CD8-positive, alpha-beta T cell (primary cell): ENCODE measurements at regions of chrX and their contacts with region 1.

Region 1: DNA sequence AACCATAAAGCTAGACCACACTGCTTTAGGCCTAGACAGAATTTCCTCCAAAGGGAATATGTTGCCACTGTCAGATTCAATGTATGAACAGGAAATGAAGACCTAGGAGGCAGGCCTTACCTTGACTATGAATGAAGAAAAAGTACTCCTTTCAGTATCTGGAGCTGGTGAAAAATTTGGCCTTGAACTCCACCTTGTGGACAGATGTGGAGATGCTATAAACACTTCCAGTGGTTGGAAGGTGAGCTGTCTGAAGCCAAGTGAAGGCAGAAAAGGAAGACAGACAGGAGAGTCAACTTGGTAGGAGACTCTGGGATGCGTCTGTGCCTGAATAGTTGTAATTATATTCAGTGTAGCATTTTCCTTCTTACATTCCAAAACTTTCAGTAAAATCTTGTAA is 17.2 kb downstream of the SPIN3 start:
- DNase-seq: peak in 8 of 9 experiments; percentile 5 to 69 (median 35)
- ATAC-seq: peak; percentile 88
- H3K4me3 ChIP-seq: no peak overlapping the region
- H3K4me3 Mint-ChIP-seq: no peak overlapping the region
- H3K27ac ChIP-seq: no peak overlapping the region
- H3K27ac Mint-ChIP-seq: no peak overlapping the region
- H3K4me1 ChIP-seq: no peaks in the 10 kb centered on the region
- H3K4me1 Mint-ChIP-seq: peaks cover 3% of the 10 kb centered on the region
- H3K27me3 ChIP-seq: no peaks in the 10 kb centered on the region
- H3K27me3 Mint-ChIP-seq: no peaks in the 10 kb centered on the region
- CTCF ChIP-seq: peak; percentile 66

Region 2: DNA sequence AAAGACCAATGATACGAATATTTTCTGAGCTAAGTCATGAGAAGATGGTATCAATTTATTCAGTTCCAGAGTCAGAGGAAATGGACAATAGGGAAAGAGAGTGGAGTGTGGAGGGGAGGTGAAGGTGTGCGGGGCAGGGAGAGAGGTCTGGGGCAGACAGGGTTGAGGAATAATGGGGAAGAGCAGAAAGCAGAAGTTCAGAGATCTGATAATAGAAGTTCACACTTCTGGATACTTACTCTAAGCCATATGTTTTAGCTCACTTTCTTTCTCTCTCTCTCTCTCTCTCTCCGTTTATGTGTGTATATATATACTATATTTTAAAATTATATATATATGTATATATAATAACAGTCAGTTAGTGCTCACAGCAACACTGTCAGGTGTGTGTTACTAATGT is 1314.6 kb before region 1 on chrX:
- CTCF ChIA-PET with region 1: no interaction called
- POLR2A ChIA-PET with region 1: no interaction called
- intact Hi-C with region 1: no loop called
- DNase-seq: no peak
- ATAC-seq: no peak
- H3K4me3 ChIP-seq: no peak overlapping the region
- H3K4me3 Mint-ChIP-seq: no peak overlapping the region
- H3K27ac ChIP-seq: no peak overlapping the region
- H3K27ac Mint-ChIP-seq: no peak overlapping the region
- H3K4me1 ChIP-seq: no peaks in the 10 kb centered on the region
- H3K4me1 Mint-ChIP-seq: no peaks in the 10 kb centered on the region
- H3K27me3 ChIP-seq: no peaks in the 10 kb centered on the region
- H3K27me3 Mint-ChIP-seq: no peaks in the 10 kb centered on the region
- CTCF ChIP-seq: no peak

Region 3: DNA sequence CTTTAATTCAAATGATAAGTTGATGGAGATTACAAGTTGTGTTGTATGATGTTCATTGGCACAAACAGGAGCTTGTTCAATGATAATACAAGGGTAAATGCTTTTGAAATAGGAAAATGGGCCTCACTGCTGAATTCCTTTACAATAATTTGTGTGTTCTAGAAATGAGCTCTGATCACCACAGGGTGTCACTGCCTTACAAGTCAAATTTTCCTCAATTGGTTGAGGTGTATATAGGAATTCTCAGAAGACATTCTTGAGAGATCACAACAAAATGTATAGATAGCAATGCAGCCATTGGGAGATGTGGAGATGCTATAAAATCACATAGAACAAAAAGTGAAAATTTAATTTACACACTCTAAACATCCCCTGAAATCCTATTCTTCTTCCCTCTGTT is 696.4 kb before region 1 on chrX:
- CTCF ChIA-PET with region 1: interaction called, 15 read pairs
- POLR2A ChIA-PET with region 1: no interaction called
- intact Hi-C with region 1: loop called in 1 of 2 experiments (anchors 2 kb)
- DNase-seq: peak in 4 of 9 experiments; percentile 6 to 68 (median 30)
- ATAC-seq: no peak
- H3K4me3 ChIP-seq: no peak overlapping the region
- H3K4me3 Mint-ChIP-seq: no peak overlapping the region
- H3K27ac ChIP-seq: no peak overlapping the region
- H3K27ac Mint-ChIP-seq: no peak overlapping the region
- H3K4me1 ChIP-seq: peaks cover 6% of the 10 kb centered on the region
- H3K4me1 Mint-ChIP-seq: peaks cover 8% of the 10 kb centered on the region
- H3K27me3 ChIP-seq: no peaks in the 10 kb centered on the region
- H3K27me3 Mint-ChIP-seq: no peaks in the 10 kb centered on the region
- CTCF ChIP-seq: peak; percentile 43

Region 4: DNA sequence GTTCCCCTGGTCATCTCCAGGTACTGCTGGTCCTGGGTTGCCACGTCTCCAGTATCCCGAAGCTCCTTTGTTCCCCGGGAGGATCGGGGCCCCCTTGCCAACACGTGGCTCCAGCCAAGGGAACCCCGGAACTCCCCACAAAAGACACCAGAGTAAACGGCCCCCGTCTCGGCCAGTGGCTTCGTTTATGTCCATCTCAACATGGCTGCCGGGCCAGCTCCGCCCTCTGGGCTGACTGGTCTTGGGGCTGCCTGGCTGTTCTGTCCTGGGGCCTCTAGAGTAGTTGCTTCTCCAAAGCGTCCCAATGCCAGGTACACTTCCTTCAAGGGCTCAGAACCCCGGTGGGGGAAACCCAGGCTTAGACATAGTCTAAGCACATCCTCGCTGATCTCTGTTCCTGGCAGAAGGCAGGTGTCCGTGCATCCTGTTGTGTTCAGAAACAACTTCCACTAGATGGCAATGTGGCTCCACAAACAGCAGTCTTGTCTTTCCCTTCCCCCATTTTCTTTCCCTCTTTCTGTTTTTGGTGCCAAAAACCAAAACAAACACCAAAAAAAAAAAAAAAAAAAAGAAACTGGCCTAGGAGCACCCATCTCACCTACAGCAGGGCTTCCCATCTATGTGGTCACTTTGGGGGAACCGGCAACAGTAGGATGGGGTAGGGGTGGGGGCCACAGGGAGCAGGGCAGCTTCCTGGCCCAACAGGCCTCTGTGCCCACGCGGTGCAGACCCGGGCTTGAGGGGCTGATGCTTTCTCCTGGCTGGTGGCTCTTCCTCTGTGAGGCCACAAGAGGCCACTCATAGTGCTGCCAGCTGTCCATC is 213.8 kb before region 1 on chrX:
- CTCF ChIA-PET with region 1: interaction called, 19 read pairs
- POLR2A ChIA-PET with region 1: interaction called, 3 read pairs
- intact Hi-C with region 1: loop called in 1 of 2 experiments (anchors 5 kb)
- DNase-seq: peak; percentile 37 to 90 (median 62)
- ATAC-seq: peak; percentile 69
- H3K4me3 ChIP-seq: peak overlapping the region in 1 of 2 experiments; percentile 35
- H3K4me3 Mint-ChIP-seq: peak overlapping the region; percentile 70
- H3K27ac ChIP-seq: peak overlapping the region; percentile 37 to 69
- H3K27ac Mint-ChIP-seq: peak overlapping the region; percentile 91
- H3K4me1 ChIP-seq: peaks cover 40% of the 10 kb centered on the region
- H3K4me1 Mint-ChIP-seq: peaks cover 42% of the 10 kb centered on the region
- H3K27me3 ChIP-seq: no peaks in the 10 kb centered on the region
- H3K27me3 Mint-ChIP-seq: no peaks in the 10 kb centered on the region
- CTCF ChIP-seq: peak; percentile 47

Region 5: GRCh38 chrX:56920338-56920997 is 57.7 kb before region 1 on chrX:
- CTCF ChIA-PET with region 1: no interaction called
- POLR2A ChIA-PET with region 1: no interaction called
- intact Hi-C with region 1: no loop called
- DNase-seq: no peak
- ATAC-seq: no peak
- H3K4me3 ChIP-seq: no peak overlapping the region
- H3K4me3 Mint-ChIP-seq: no peak overlapping the region
- H3K27ac ChIP-seq: no peak overlapping the region
- H3K27ac Mint-ChIP-seq: no peak overlapping the region
- H3K4me1 ChIP-seq: no peaks in the 10 kb centered on the region
- H3K4me1 Mint-ChIP-seq: no peaks in the 10 kb centered on the region
- H3K27me3 ChIP-seq: no peaks in the 10 kb centered on the region
- H3K27me3 Mint-ChIP-seq: no peaks in the 10 kb centered on the region
- CTCF ChIP-seq: no peak